SK-N-SH (cell line): ENCODE measurements at regions of chr2 and their contacts with region 1.

Region 1: DNA sequence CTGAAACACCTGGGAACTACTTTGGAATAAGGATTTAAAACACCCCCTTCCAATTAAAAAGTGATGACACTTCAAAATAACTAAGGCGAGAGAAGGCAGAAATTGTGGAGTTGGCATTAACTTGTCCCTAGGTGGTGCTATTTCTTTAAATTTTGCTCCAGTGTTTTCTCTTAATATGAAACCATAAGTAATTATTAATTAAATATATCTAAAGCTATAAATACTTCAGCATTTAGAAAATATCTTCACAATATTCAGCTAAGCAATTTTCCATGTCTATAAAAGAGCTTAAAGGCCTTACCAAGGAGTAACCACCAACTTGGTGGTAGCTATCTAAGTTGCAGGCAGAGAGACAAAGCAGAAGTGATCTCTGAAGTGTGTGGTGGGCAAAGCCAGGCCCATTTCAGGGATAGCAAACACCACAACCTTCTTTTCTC is 186.8 kb upstream of the PGAP1 start:
- DNase-seq: peak; percentile 37
- H3K4me3 ChIP-seq: no peak overlapping the region
- H3K27ac ChIP-seq: peak overlapping the region in 1 of 2 experiments; percentile 84; a peak in 2 of 4 replicates
- H3K4me1 ChIP-seq: peaks cover 5 to 16% of the 10 kb centered on the region in 2 experiments; a peak in 2 of 4 replicates
- H3K27me3 ChIP-seq: no peaks in the 10 kb centered on the region
- CTCF ChIP-seq: peak; percentile 72
- EP300 ChIP-seq: no peak
- RAD21 ChIP-seq: peak; percentile 79

Region 2: DNA sequence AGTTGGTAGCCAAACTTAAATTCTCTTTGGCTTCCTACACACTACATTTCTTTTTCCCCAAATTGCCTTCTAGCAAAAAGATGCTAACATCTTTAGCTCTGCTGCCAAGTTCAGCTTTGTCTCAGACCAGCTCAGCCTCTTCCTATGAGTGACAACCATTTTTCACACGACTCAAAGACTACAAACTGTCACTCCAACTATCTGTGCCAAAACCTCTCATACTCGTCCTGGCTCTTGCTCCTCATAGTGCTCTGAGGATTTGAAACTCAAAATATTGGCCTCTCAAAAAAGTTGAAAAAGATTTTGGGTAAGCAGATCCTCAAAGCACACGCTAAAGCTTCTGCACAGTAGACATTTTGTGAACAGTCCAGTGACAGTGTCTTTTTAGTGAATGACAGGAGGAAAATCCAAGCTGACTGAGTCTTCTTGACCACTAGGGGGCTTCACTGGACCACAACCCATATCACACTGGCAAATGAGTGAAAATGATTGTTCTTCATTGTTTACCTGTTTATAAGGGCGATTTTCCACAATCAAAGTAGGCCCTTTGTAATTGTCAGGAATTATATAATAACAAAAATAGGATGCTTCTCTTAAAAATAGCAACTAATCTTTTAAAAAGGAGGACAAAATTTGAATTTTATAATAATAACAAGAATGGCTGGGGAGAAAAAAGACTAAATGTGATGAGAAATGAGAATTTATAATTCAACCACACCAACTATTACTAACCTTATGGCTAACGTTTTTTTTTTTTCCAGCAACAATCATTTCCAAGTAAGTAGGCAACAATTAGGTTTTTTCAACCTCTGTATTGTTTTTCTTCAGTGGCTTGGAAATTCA is 101.3 kb before region 1 on chr2:
- CTCF ChIA-PET with region 1: interaction called, 19 read pairs
- POLR2A ChIA-PET with region 1: no interaction called
- DNase-seq: peak; percentile 77
- H3K4me3 ChIP-seq: no peak overlapping the region
- H3K27ac ChIP-seq: no peak overlapping the region
- H3K4me1 ChIP-seq: no peaks in the 10 kb centered on the region; a peak in 2 of 4 replicates
- H3K27me3 ChIP-seq: no peaks in the 10 kb centered on the region
- CTCF ChIP-seq: peak; percentile 93
- EP300 ChIP-seq: no peak
- RAD21 ChIP-seq: peak; percentile 88

Region 3: DNA sequence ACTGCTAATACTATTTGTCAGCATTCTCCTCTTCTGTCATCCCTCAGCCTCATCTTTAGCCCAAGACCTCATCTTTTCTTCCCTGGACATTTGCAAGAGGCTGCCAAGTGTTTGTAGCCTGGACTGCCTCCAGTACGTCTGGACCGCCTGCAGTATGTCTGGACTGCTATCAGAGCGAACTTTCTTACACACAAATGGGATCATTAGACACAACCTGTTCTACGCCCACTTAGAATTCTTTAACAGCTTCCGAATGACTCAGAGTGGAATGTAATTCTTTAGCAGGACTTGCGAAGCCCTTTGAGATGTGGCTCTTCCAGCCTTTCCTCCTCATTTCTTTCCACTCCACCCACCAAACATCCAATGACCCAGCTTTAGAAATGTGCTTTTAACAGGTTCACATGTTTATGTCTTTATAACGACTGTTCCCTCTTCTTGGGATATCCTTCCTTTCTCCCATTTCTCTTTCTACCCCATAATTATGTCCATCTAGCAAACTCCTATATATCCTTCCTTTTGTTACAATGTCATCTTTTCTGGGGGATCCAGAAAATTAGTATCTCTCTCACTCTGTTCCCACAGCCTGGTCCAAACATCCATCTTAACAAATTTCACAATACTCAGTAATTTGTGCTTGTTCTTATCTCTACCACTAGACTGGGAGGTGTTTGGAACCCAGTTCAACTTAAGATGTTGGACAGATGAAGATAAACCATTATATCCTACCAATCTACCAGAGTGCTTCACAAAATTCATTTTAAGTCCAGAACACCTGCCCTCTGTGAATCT is 15.5 kb before region 1 on chr2:
- CTCF ChIA-PET with region 1: interaction called, 25 read pairs
- POLR2A ChIA-PET with region 1: interaction called, 3 read pairs
- DNase-seq: no peak
- H3K4me3 ChIP-seq: no peak overlapping the region
- H3K27ac ChIP-seq: peak overlapping the region; percentile 4 to 93; a peak in 3 of 4 replicates
- H3K4me1 ChIP-seq: peaks cover 18 to 57% of the 10 kb centered on the region in 2 experiments; a peak in 3 of 4 replicates
- H3K27me3 ChIP-seq: no peaks in the 10 kb centered on the region
- CTCF ChIP-seq: no peak
- EP300 ChIP-seq: peak in 1 of 2 experiments; percentile 19; a peak in 1 of 4 replicates
- RAD21 ChIP-seq: no peak

Region 4: DNA sequence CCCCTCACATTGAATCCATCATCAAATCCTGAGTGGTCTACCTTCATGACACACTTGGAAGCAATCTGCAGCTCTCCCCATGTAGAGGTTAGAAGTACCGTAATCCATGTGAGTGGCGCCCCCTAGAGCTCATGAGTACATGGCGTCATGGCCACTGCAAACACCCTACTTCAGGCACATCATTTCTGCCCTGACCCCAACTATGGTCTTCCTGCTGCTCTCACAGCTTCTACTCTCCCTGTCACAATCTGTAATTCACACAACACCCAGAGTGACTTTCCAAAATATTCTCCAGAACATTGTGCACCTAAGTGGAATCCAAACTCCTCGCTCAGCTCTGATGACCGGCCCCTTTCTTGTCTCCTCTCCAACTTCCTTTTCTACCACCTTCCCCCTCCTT is 55.4 kb after region 1 on chr2:
- CTCF ChIA-PET with region 1: interaction called, 55 read pairs
- POLR2A ChIA-PET with region 1: no interaction called
- DNase-seq: peak; percentile 70
- H3K4me3 ChIP-seq: no peak overlapping the region
- H3K27ac ChIP-seq: peak overlapping the region in 1 of 2 experiments; percentile 3; a peak in 1 of 4 replicates
- H3K4me1 ChIP-seq: peaks cover 5 to 13% of the 10 kb centered on the region in 2 experiments; a peak in 3 of 4 replicates
- H3K27me3 ChIP-seq: no peaks in the 10 kb centered on the region
- CTCF ChIP-seq: peak; percentile 67
- EP300 ChIP-seq: no peak
- RAD21 ChIP-seq: peak; percentile 74

Region 5: DNA sequence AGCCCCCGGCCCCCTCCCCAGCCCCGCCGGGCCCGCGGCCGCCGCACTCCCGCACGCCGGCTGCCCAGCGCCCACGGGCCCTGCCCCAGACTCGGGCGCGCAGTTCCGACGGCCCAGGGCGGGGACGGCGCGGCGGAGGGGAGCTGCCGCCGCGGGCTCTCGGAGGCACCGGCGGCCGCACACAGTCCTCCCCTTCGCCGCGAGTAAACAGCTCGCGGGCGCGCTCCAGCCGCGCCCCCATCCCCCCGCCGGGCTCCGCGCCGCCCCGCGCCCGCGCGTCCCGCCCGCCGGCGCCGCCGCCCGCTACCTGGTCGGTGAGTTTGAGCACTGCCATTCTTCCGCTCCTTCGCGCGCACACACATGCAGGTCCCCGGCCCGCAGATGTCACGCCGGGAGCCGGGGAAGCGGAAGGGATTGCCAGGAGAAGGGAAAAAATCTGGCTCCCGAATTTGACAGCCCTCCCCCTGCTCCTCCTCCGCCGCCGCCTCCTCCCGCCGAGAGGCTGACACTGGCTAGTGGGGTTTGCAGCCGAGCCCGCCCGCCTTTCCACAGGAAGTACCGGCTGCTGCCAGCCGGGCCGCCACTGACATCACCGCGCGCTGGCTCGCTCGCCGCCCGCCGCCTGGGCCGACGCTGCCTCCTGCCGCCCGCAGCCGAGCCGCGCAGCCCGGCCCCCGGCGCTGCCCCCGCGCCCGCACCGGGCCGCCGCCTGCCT is 197.1 kb after region 1 on chr2 and contains the start of gene ANKRD44:
- CTCF ChIA-PET with region 1: interaction called, 25 read pairs
- POLR2A ChIA-PET with region 1: no interaction called
- DNase-seq: peak; percentile 95
- H3K4me3 ChIP-seq: peak within 1 kb of the TSS; percentile 70 to 73
- H3K27ac ChIP-seq: peak within 1 kb of the TSS in 1 of 2 experiments; percentile 94; a peak in 2 of 4 replicates
- H3K4me1 ChIP-seq: peaks cover 7 to 36% of the 10 kb centered on the region in 2 experiments; a peak in 3 of 4 replicates
- H3K27me3 ChIP-seq: no peaks in the 10 kb centered on the region
- CTCF ChIP-seq: peak; percentile 34
- EP300 ChIP-seq: no peak
- RAD21 ChIP-seq: peak; percentile 66
- polyA plus RNA-seq, gene ANKRD44: 12.3 and 12.5 TPM in 2 replicates

Region 6: DNA sequence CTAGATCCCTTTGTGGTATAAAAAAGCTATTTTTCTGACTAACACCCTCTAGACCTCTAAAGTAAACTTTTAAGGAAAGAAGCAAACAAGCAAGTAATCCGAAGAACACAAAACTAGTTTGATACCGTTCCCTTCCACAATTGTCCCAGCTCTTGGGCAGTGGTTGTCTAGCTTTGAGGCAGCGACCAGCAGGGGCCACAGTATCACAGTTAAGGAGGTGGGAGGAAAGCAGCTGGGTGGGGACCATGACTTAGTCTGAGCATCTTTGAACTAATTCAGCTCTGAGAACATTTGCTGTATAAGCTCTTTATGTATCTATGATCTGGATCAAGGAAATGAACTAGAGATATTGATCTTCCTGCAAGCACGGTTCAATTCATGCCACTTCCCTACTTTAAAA is 270.5 kb after region 1 on chr2:
- CTCF ChIA-PET with region 1: interaction called, 16 read pairs
- POLR2A ChIA-PET with region 1: no interaction called
- DNase-seq: no peak
- H3K4me3 ChIP-seq: no peak overlapping the region
- H3K27ac ChIP-seq: no peak overlapping the region
- H3K4me1 ChIP-seq: peaks cover under 1 to 3% of the 10 kb centered on the region in 2 experiments; a peak in 2 of 4 replicates
- H3K27me3 ChIP-seq: no peaks in the 10 kb centered on the region
- CTCF ChIP-seq: no peak
- EP300 ChIP-seq: no peak
- RAD21 ChIP-seq: no peak